ENCODE measurements at regions of chr16 and their contacts with region 1.

Region 1: DNA sequence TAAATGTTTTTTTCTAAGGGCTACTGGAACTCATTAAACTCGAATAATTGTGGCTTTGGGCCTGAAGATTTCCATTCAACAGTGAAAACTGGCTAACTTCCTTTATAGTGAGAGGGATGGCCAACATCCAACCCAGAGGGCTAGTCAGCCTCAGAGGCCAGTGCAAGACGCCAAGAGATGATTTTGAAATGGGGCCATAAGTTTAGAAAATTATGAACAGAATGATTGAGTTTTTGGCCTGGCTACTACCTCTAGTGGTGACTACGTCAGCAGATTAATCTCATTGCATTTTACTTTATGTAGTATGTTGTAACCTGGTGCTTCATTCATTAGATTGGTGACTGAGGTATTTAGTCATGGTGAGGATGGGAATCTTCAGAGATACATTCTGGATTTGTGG is 28.4 kb downstream of the HAPSTR1 start:
- DNase-seq: no peak

Region 2: GRCh38 chr16:9107025-9107970 is 12.5 kb before region 1 on chr16:
- intact Hi-C with region 1: loop called (anchors 1 kb)
- DNase-seq: no peak

Region 3: GRCh38 chr16:9469512-9469911 is 349.7 kb after region 1 on chr16:
- intact Hi-C with region 1: no loop called
- DNase-seq: no peak

Measured in cardiac septum (tissue), 1 donor.